Caco-2 (cell line): ENCODE measurements at regions of chr22 and their contacts with region 1.

Region 1: GRCh38 chr22:37544955-37545699 is 15.2 kb upstream of the CDC42EP1 start:
- DNase-seq: peak; percentile 83 to 84
- H3K4me3 ChIP-seq: peak overlapping the region; percentile 20
- H3K4me3 Mint-ChIP-seq: peak overlapping the region; percentile 52
- H3K27ac Mint-ChIP-seq: peak overlapping the region; percentile 66
- H3K4me1 ChIP-seq: peaks cover 47% of the 10 kb centered on the region
- H3K4me1 Mint-ChIP-seq: peaks cover 34% of the 10 kb centered on the region
- H3K27me3 ChIP-seq: no peaks in the 10 kb centered on the region
- H3K27me3 Mint-ChIP-seq: no peaks in the 10 kb centered on the region
- CTCF ChIP-seq: peak; percentile 64 to 65

Region 2: GRCh38 chr22:37561212-37562048 is 16.3 kb after region 1 on chr22:
- CTCF ChIA-PET with region 1: interaction called, 48 read pairs
- POLR2A ChIA-PET with region 1: interaction called, 6 read pairs
- intact Hi-C with region 1: loop called (anchors 1 kb)
- DNase-seq: peak; percentile 89 to 94
- H3K4me3 ChIP-seq: peak overlapping the region; percentile 81
- H3K4me3 Mint-ChIP-seq: peak overlapping the region; percentile 76
- H3K27ac Mint-ChIP-seq: peak overlapping the region; percentile 70
- H3K4me1 ChIP-seq: peaks cover 46% of the 10 kb centered on the region
- H3K4me1 Mint-ChIP-seq: peaks cover 22% of the 10 kb centered on the region
- H3K27me3 ChIP-seq: no peaks in the 10 kb centered on the region
- H3K27me3 Mint-ChIP-seq: no peaks in the 10 kb centered on the region
- CTCF ChIP-seq: peak; percentile 86 to 90

Region 3: DNA sequence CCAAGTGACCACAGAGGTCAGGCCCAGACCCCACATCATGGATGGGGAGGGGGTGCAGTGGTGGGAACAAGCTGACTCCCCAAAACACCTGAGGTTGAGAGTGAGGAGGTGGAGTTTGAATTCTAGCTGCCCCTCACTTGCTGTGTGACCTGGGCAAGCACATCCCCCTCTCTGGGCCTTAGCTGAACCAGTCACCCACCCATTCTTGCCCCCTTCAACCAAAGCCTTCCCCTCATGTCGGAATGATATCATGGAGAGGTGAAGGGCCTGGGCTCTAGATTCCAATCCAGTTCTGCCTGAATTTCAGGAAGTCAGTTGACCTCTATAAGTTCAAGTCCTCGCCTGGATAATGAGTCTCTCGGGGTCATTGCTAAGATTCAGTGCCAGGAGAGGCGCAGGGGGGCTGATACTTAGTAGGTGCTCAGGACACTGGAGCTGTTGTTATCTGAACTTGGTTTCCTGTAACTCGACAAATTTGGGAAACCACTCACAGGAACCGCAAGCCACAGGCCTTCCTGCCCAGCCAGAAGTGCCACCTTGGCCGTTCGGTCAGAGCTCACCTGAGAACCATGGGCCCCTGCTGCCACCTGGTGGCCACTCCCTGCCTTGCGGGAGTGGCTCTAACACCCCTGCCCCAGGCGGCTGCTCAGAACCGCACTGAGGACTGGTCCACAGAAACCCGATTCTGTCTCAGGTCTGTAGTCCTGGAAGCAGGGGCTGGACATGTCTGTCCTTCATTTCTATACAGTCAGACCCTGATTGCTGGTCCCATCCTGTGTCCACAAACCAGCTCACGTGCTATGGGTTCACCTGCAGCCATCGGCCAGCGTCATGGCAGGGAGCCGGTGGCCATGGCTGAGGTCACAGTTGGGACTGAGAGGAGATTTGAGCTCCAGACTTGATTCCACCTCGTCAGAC is 22.0 kb after region 1 on chr22:
- CTCF ChIA-PET with region 1: interaction called, 48 read pairs
- POLR2A ChIA-PET with region 1: interaction called, 4 read pairs
- intact Hi-C with region 1: loop called (anchors 1 kb)
- DNase-seq: peak; percentile 79 to 90
- H3K4me3 ChIP-seq: no peak overlapping the region
- H3K4me3 Mint-ChIP-seq: peak overlapping the region; percentile 16
- H3K27ac Mint-ChIP-seq: peak overlapping the region; percentile 48
- H3K4me1 ChIP-seq: peaks cover 80% of the 10 kb centered on the region
- H3K4me1 Mint-ChIP-seq: peaks cover 33% of the 10 kb centered on the region
- H3K27me3 ChIP-seq: no peaks in the 10 kb centered on the region
- H3K27me3 Mint-ChIP-seq: no peaks in the 10 kb centered on the region
- CTCF ChIP-seq: peak; percentile 90 to 93